Testis (tissue), 5 donors: ENCODE measurements at regions of chr1 and their contacts with region 1.

Region 1: DNA sequence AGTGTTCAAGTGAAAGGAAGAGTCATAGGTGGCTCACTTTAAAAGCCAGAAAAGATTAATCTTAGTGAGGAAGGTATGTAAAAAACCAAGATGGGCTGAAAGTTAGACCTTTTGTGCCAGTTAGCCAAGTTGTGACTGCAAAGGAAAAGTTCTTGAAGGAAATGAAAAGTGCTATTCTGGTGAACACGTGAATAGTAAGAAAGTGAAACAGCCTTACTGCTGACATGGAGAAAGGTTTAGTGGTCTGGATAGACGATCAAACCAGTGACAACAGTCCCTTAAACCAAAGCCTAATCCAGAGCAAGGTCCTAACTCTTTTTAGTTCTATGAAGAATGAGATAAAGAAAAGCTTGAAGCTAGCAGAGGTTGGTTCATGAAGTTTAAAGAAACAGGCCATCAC is 106.4 kb downstream of the CTH start:
- DNase-seq: no peak
- H3K4me3 ChIP-seq: no peak overlapping the region
- H3K27ac ChIP-seq: no peak overlapping the region
- H3K4me1 ChIP-seq: no peaks in the 10 kb centered on the region
- H3K27me3 ChIP-seq: no peaks in the 10 kb centered on the region
- CTCF ChIP-seq: no peak
- POLR2A ChIP-seq: no peak

Region 2: GRCh38 chr1:70436622-70437251 is 80.7 kb before region 1 on chr1:
- intact Hi-C with region 1: loop called (anchors 5 kb)
- DNase-seq: peak; percentile 26
- H3K4me3 ChIP-seq: no peak overlapping the region
- H3K27ac ChIP-seq: no peak overlapping the region
- H3K4me1 ChIP-seq: peaks cover 3% of the 10 kb centered on the region
- H3K27me3 ChIP-seq: no peaks in the 10 kb centered on the region
- CTCF ChIP-seq: peak; percentile 31 to 51 (median 40)
- POLR2A ChIP-seq: no peak

Region 3: GRCh38 chr1:70656361-70656760 is 138.9 kb after region 1 on chr1:
- intact Hi-C with region 1: no loop called
- DNase-seq: no peak
- H3K4me3 ChIP-seq: no peak overlapping the region
- H3K27ac ChIP-seq: no peak overlapping the region
- H3K4me1 ChIP-seq: no peaks in the 10 kb centered on the region
- H3K27me3 ChIP-seq: no peaks in the 10 kb centered on the region
- CTCF ChIP-seq: no peak
- POLR2A ChIP-seq: no peak